ENCODE measurements at regions of chr2 and their contacts with region 1.

Region 1: GRCh38 chr2:222860740-222861410 is at the start of gene ACSL3:
- DNase-seq: peak; percentile 95
- H3K4me3 Mint-ChIP-seq: peak within 1 kb of the TSS; percentile 71
- H3K27ac Mint-ChIP-seq: peak within 1 kb of the TSS; percentile 84
- H3K4me1 Mint-ChIP-seq: peaks cover 3% of the 10 kb centered on the region
- H3K27me3 Mint-ChIP-seq: peaks cover 5% of the 10 kb centered on the region
- total RNA-seq, gene ACSL3: 48.7 to 57.2 TPM

Region 2: DNA sequence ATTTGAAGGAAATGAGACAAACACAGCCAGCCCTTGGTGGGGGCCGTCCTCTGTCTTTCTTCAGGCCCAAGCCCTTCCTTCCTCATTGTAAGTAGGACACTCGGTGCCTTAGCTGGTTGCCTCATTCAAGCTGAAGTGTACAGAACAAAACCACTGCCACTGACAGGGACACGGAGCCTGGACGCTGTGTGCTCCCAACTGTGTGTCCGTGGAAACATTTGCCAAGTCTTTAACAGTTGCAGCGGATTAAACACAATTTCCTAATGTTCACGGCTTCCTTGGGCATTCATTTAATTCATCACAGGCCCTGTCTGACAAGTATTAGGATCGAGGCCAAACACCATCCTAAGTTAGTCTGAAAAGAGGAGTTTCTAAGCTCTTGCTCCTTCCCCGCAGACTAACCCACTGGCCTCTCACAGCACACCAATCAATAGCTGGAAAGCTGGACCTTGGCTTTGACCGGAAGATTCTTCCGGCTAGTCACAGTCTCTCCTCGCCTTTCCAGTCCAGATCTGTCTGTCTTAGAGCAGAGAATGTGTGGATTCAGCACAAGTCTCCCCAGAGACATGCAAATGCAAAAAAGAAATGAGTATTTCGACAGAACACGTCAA is 68.8 kb before region 1 on chr2:
- CTCF ChIA-PET with region 1: interaction called, 5 read pairs
- POLR2A ChIA-PET with region 1: interaction called, 4 read pairs
- intact Hi-C with region 1: loop called (anchors 5 kb)
- DNase-seq: no peak
- H3K4me3 Mint-ChIP-seq: no peak overlapping the region
- H3K27ac Mint-ChIP-seq: no peak overlapping the region
- H3K4me1 Mint-ChIP-seq: peaks cover 12% of the 10 kb centered on the region
- H3K27me3 Mint-ChIP-seq: no peaks in the 10 kb centered on the region

Region 3: DNA sequence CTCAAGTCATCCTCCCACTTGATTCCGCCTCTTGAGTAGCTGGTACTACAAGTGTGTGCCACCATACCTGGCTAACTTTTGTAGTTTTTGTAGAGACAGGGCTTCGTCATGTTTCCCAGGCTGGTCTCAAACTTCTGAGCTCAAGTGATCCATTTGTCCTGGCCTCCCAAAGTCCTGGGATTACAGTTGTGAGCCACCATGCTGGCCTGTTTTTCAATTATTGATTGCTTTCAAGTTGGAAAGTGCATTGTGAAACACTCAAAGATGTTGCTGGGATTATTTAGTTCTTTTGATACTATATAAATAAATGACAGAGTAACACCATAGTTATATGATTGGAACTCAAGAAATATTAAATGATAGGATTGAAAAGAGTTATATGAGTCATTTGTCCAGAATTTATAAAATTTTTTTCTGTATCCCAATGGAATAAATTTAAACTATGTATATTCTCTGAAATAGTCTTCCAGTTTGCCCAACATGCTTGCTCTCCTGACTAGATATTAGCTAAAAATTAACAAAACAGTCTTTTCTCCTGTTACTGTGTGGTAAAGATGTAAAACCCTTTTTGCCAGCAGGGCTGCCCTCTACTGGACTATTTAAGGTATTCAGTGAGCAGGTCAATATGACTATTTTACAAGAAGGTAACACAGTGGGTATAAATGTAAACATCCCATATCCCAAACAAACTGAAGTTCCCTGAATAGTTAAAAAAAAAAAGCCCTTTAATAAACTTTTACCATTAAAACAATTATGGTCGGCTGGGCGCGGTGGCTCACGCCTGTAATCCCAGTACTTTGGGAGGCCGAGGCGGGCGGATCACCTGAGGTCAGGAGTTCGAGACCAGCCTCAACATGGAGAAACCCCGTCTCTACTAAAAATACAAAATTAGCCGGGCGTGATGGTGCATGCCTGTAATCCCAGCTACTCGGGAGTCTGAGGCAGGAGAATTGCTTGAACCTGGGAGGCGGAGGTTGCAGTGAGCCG is 42.7 kb after region 1 on chr2:
- CTCF ChIA-PET with region 1: interaction called, 5 read pairs
- POLR2A ChIA-PET with region 1: no interaction called
- intact Hi-C with region 1: loop called (anchors 5 kb)
- DNase-seq: peak; percentile 34
- H3K4me3 Mint-ChIP-seq: no peak overlapping the region
- H3K27ac Mint-ChIP-seq: no peak overlapping the region
- H3K4me1 Mint-ChIP-seq: peaks cover 13% of the 10 kb centered on the region
- H3K27me3 Mint-ChIP-seq: no peaks in the 10 kb centered on the region

Region 4: DNA sequence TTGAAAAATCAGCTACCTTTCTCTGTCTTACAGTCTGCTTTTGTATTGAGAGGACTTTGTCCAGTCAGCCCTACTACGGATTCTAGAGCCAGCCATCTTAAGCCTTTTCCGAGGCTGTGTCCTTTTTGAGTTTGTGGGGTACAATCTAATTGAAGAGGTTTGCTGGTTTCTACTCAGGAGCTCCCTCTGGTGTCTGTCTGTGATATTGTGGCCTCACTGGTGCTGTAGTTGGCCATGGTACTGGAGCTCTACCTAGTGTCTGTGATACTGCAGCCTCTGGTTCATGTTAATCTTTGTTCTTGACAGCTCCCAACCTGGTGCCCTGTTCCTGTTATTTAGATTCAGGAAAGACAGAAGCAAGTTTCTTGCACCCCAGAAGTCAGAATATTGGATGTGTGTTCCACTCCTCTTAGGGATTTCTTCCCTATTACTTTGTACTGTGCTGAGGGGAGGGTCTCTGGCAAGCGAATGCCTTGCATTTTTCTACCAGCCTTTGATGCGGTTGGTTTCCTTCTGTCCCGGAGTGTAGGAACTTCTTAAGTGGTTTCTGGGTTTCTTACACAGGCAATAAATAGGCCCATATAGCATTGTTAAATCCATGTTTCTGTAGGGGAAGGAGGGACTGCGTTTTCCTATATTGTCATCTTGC is 78.5 kb after region 1 on chr2:
- CTCF ChIA-PET with region 1: interaction called, 5 read pairs
- POLR2A ChIA-PET with region 1: no interaction called
- intact Hi-C with region 1: loop called (anchors 5 kb)
- DNase-seq: peak; percentile 74
- H3K4me3 Mint-ChIP-seq: no peak overlapping the region
- H3K27ac Mint-ChIP-seq: no peak overlapping the region
- H3K4me1 Mint-ChIP-seq: peaks cover 11% of the 10 kb centered on the region
- H3K27me3 Mint-ChIP-seq: no peaks in the 10 kb centered on the region

Region 5: GRCh38 chr2:223944703-223945531 is 1084.0 kb after region 1 on chr2 and contains the start of gene WDFY1:
- CTCF ChIA-PET with region 1: no interaction called
- POLR2A ChIA-PET with region 1: no interaction called
- intact Hi-C with region 1: loop called (anchors 5 kb)
- DNase-seq: peak; percentile 88
- H3K4me3 Mint-ChIP-seq: peak within 1 kb of the TSS; percentile 91
- H3K27ac Mint-ChIP-seq: peak within 1 kb of the TSS; percentile 91
- H3K4me1 Mint-ChIP-seq: peaks cover 54% of the 10 kb centered on the region
- H3K27me3 Mint-ChIP-seq: no peaks in the 10 kb centered on the region
- total RNA-seq, gene WDFY1: 48.7 to 50.1 TPM